HCT116 (cell line): ENCODE measurements at regions of chr16 and their contacts with region 1.

Region 1: DNA sequence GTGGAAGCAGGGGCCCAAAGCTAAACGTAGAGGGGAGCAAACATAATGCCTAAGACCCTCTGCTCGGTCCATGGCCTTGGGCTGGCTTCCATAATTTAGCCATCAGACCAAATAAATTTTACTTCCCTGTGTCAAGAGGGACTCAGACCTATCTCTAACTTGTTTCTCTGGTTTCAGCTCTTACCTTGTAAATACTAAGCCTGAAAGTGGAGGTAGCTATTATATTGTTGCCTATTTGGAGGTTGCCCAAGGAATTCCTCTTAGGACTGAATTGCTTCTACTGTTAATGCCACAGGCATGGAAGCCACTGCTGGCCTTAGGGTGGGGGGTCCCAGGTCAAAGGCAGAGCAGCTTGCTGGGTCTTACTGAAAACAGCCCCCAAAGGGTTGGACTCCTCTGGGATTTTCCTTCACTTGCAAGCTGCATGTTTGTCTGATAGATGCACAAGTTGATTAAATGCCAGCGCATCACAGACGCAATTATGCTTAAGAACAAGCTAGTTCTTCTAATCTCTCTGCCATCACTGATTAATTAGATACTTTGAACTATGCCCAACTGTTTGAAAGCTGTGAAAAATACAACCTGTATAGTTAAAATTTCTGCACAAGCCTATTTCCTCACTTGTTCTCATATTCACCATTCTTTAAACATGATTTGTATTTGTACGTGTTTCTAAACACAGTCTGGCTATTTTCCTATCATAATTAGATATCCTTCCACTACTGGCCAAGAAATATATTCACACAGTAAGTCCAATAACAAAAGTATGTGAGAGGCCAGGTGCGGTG is 67.9 kb upstream of the HAS3 start:
- DNase-seq: no peak
- ATAC-seq: no peak
- H3K4me3 ChIP-seq: no peak overlapping the region
- H3K27ac ChIP-seq: no peak overlapping the region
- H3K4me1 ChIP-seq: peaks cover 18 to 49% of the 10 kb centered on the region in 2 experiments
- H3K27me3 ChIP-seq: no peaks in the 10 kb centered on the region
- CTCF ChIP-seq: no peak
- POLR2A ChIP-seq: no peak
- RAD21 ChIP-seq: no peak

Region 2: GRCh38 chr16:69049146-69049545 is 11.6 kb after region 1 on chr16:
- CTCF ChIA-PET with region 1: interaction called, 10 read pairs
- POLR2A ChIA-PET with region 1: no interaction called
- RAD21 ChIA-PET with region 1: no interaction called
- intact Hi-C with region 1: no loop called
- DNase-seq: no peak
- ATAC-seq: peak; percentile 41; the same call in 1 of the 2 replicates
- H3K4me3 ChIP-seq: no peak overlapping the region
- H3K27ac ChIP-seq: no peak overlapping the region; the same call in 1 of the 2 replicates
- H3K4me1 ChIP-seq: peaks cover 42 to 65% of the 10 kb centered on the region in 2 experiments
- H3K27me3 ChIP-seq: no peaks in the 10 kb centered on the region
- CTCF ChIP-seq: no peak
- POLR2A ChIP-seq: no peak
- RAD21 ChIP-seq: no peak